Left ventricle myocardium superior (tissue), 1 donor: ENCODE measurements at regions of chr3 and their contacts with region 1.

Region 1: DNA sequence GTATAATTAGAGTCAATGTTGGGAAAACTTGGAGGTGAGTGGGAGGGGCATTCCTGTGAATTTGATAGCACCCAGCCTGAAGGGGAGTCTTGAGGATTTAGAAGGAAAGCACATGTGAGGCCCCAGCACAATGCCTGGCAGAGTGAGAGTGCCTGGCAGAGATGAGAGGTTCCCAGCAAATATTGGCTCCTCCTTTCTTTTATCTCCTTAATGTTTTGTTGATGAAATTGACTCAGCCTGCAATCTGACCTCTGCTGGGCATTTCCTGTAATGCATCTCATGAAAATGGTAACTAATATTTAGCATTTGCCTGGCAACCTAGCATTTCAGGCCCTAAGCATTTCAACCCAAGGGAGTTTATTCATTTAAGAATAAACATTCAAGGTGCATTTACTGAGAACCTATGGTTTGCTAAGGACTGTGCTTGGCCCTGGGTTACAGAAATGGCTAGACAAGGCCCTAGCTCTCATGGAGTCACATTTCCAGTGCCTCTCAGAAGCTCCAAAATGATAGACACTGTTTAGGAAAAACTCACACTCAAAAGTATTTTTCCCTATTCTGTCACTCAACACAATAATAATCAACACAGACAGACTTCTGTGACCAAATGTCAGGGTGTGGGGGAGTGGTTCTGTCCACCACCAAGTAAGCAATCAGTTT is 19.0 kb downstream of the PDHB start:
- DNase-seq: peak; percentile 48
- ATAC-seq: peak; percentile 79

Region 2: GRCh38 chr3:58260733-58261132 is 153.9 kb before region 1 on chr3:
- intact Hi-C with region 1: no loop called
- DNase-seq: no peak
- ATAC-seq: peak; percentile 33

Region 3: GRCh38 chr3:58324391-58325390 is 90.0 kb before region 1 on chr3:
- intact Hi-C with region 1: loop called (anchors 5 kb)
- DNase-seq: no peak
- ATAC-seq: no peak